RWPE1 (cell line): ENCODE measurements at regions of chr2 and their contacts with region 1.

Region 1: GRCh38 chr2:168346725-168347477 is 99.5 kb upstream of the STK39 start:
- DNase-seq: peak; percentile 72
- H3K27ac ChIP-seq: no peak overlapping the region
- CTCF ChIP-seq: peak; percentile 81

Region 2: DNA sequence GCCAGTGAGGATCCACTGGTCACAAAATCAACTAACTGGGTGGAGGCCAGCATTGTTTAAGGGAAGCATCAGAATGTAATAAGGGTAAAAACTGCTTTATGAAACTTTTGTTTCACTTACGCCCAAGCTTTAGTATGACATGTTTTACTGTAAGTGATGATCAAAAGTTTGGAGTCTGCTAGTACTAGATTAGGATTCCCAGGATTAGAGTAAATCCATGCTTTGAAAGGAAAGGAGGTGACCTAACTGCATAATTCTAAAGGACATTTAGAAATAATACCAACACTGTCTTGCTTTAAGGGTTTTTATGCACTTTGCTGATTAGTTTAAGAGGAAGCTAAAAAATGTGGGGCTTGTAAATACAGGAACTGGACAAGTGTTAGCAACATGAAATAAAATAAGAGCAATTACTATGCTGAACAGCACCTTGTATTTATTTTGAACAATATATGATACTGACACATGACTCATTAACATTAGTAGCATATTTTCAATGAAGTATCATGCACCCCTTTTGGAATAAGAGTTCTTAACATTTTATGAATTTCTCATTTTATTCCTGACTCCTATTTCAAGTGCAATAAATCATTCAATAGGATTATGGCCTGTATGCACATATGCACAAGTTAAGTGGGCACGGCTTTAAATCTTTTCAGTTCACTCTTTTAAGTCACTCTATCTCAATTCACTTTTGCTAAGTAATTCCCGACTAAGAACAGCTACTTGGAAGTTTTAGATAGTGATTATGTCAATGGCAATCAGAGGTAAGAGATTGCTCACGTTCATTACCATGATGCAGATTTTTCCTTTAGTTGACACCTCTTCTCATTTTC is 162.0 kb before region 1 on chr2:
- CTCF ChIA-PET with region 1: no interaction called
- POLR2A ChIA-PET with region 1: no interaction called
- DNase-seq: peak; percentile 55
- H3K27ac ChIP-seq: no peak overlapping the region
- CTCF ChIP-seq: no peak

Region 3: DNA sequence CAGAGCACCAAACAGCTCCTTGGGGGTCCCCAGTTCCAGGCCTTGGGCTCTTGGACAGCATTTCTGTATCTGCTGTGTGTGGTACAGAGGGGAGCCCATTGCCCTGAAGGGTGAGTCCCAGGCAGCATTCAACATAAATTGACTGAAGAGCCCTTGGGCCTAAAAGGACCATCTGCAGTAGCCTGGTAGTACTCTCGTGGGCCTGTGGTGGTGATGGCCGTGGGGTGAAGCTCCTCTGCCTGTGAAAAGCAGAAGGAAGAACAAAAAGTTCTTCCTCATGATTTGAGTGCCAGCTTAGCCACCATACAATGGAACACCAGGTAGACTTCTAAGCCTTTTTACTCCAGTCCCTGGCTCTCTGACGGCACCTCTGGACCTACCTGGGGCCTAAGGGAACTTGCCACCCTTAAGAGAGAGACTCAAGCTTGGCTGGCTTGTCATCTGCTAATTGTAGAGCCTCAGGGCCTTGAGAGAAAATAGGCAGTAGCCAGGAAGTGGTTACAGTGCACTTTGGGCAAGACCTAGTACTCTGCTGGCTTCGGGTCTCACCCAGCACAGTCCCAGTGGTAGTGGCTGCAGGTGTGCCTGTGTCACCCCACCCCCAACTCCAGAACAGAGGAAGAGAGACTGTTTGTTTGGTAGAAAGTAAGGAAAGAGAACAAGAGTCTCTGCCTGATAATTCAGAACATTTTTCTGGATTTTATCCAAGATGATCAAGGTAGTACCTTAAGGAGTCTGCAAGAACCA is 24.5 kb after region 1 on chr2:
- CTCF ChIA-PET with region 1: interaction called, 10 read pairs
- POLR2A ChIA-PET with region 1: no interaction called
- DNase-seq: no peak
- H3K27ac ChIP-seq: no peak overlapping the region
- CTCF ChIP-seq: no peak